ENCODE measurements at regions of chr22 and their contacts with region 1.

Region 1: DNA sequence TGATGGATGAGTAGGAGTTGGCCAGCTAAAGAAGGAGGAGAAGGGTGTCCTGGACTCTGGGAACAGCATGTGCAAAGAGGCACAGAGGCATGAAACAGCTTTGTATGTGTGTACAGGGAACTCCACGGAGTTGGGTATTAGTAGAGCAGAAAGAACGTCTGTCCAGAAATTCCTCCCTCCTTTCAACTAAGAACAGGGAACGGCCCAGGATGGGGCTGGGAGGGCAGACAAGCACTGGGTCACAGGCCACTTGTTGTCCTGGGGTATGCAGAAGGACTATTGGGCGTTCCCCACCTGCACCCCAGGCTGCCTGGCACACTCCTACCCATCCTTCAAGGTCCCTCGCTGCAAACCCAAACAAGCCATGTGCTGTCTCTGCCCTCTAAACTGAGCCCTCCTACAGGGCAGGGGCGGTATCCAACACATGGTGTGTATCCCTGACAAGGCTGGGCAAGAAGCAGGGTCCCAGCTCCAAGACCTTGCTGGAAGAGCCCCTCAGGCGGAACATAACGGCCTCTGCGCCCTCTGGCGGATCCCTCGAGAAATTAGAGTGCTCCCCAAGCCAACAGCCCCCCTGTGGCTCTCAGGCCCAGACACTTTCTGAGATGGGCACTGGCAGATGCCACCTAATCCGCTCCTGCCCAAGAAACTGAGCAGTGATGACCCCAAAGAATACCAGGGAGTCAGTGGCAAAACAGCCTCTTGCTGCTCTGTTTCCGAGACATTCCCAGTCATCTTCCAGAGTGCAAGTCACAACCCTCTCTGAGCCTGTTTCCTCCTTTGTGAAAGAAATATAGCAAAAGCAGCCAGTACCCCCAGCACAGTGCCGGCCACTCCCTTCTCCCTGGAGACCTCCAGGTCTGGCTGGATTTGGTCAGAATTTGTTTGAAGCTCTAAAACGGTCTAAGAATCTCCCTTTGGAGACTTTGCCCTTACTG is 1.6 kb upstream of the ELFN2 start:
- DNase-seq: no peak
- H3K4me3 ChIP-seq: no peak overlapping the region
- CTCF ChIP-seq: peak; percentile 77

Region 2: GRCh38 chr22:37309211-37310074 is 119.5 kb before region 1 on chr22:
- CTCF ChIA-PET with region 1: interaction called, 105 read pairs
- POLR2A ChIA-PET with region 1: no interaction called
- DNase-seq: no peak
- H3K4me3 ChIP-seq: no peak overlapping the region
- CTCF ChIP-seq: no peak

Region 3: GRCh38 chr22:37324340-37325038 is 104.4 kb before region 1 on chr22:
- CTCF ChIA-PET with region 1: interaction called, 21 read pairs
- POLR2A ChIA-PET with region 1: no interaction called
- DNase-seq: no peak
- H3K4me3 ChIP-seq: no peak overlapping the region; the same call in 1 of the 2 replicates
- CTCF ChIP-seq: no peak

Region 4: DNA sequence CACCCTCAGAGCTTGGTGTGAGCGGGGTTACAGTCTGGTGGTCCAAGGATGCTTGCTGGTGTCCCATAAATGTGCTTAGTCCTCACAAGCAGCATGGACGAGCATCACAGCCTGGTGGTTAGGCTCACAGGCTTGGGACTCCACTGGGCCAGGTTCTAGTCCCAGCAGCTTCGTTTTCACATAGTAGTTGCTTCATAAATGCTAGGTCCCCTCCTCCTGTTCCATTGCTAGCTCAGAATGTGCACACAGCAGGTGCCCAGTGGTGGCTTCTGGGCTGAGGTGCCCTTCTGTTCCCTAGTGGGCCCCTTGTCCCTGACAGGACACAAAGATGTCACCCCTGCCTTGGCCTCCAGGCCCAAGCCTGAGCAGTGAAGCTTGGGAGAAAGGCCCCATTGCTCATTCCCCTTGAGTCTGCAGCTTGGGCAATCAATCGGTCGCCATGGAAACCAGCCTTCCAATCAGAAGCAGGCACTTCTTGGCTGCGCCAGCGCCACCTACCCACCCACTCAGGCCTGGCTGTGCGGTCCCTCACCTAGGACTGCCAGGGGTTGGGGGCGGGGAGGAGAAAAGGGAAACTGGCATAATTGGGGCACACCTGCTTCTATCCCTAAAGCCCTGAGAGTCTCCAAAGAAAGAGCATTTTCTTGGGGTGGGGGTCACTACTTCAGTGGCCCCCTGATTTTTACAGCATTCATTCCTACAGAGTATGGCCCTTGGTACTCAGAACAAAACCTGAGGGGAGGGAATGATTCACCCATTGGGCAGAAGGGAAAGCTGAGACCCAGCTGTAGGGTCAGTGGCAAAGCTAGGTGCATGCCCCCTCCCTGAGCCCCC is 98.5 kb before region 1 on chr22:
- CTCF ChIA-PET with region 1: interaction called, 21 read pairs
- POLR2A ChIA-PET with region 1: no interaction called
- DNase-seq: no peak
- H3K4me3 ChIP-seq: no peak overlapping the region
- CTCF ChIP-seq: peak; percentile 40

Region 5: DNA sequence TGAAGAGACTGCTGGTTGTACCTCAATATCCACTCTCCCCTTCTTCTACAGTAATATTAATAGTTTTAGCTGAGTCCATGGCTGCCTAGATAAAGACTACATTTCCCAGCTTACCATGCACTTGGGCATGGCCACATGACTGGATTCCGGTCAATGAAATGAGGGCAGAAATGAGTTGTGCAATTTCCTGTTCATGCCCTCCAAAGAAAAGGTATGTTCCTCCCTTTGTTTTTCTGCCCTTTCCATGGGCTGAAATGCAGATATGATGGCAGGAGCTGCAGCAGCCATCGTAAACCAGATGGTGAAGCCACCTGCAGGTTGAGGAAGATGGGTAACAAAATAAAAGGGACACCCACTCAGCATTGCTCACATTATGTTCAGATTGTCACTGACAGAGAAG is 13.6 kb after region 1 on chr22:
- CTCF ChIA-PET with region 1: interaction called, 28 read pairs
- POLR2A ChIA-PET with region 1: no interaction called
- DNase-seq: no peak
- H3K4me3 ChIP-seq: no peak overlapping the region
- CTCF ChIP-seq: no peak

Region 6: GRCh38 chr22:37457093-37457893 is 28.4 kb after region 1 on chr22:
- CTCF ChIA-PET with region 1: interaction called, 28 read pairs
- POLR2A ChIA-PET with region 1: interaction called, 9 read pairs
- DNase-seq: no peak
- H3K4me3 ChIP-seq: no peak overlapping the region
- CTCF ChIP-seq: peak; percentile 90

Measured in AG04449 (cell line).